HEK293T (cell line): ENCODE measurements at regions of chr17 and their contacts with region 1.

Region 1: GRCh38 chr17:65100316-65101140 is 36.6 kb upstream of the RGS9 start:
- DNase-seq: peak; percentile 88

Region 2: DNA sequence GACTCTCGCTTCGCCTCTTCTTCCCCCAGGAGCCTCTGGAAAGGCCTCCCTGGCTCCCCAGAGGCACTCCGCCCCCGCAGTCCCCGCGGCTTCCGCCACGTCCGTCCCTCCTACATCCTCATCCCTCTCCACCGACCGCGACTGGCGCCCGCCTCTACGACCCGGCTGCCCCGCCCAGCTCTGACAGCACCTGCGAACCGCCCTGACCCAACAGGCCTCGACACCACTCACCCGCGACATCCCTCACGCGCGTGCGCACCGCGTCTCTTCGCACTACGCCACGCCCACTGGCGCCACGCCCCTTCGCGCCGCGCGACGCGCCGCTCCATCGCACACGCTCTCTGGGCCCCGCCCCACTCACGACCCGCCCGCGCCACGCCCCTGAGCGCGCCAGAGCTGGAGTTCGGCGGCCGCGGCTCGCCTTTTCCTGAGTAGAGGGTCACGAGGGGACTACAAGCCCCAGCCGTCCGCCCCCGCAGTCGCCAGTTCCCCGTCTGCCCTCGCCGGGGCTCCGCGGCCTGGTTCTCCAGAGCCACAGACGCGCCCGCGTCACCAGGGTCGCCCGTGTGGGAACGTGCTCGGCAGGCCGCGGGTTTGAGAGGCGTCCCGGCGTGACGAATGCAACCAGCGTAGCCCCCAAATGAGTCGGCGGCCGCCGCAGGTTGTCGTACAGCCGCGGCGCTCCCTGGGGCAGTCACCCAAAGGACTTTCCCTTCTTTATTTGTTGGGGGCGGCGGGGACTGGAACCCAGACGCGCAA is 125.0 kb before region 1 on chr17:
- CTCF ChIA-PET with region 1: interaction called, 3 read pairs
- POLR2A ChIA-PET with region 1: interaction called, 17 read pairs
- DNase-seq: peak; percentile 94

Region 3: GRCh38 chr17:65056262-65056638 is 44.3 kb before region 1 on chr17:
- CTCF ChIA-PET with region 1: no interaction called
- POLR2A ChIA-PET with region 1: interaction called, 10 read pairs
- DNase-seq: no peak

Region 4: DNA sequence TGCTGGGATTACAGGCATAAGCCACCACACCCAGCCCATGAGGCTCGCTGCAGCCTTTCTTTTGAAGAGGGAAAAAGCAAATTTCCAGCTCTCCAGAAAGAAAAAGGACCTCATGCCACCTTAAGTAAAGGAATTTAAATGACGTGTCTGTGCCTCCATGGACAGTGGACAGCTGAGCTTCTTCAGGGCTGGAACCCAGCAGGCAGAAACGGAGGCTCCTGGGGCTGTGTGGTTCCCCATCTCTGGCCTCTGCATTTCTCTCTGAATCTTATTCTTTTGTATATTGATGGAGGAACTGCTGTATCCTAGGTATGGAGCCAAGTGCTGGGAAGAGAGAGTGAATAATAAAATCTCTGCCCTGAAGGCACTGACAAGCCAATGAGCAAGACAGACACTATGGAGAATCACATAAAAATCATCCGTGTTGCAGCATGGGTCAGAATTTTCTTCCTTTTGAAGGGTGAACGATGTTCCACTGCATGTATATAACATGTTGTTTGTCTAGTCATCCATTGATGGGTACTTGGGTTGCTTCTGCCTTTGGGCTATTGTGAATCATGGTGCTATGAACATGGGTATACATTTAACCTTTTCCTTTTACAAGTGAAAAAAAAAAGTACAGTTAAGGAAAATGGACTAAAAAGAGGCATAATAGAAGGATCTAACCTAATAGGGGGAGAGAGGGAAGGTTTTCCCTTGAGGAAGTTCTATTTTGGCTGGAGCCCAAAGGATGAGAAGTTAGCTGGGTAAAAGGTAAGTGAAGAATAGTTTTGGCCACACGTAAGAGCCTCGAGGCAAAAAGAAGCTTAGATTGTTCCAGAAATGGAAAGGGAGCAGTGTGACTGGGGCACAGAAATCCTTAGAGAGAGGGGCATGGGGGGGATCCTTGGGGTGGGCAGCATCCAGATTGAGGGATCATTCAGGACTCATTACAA is 11.8 kb before region 1 on chr17:
- CTCF ChIA-PET with region 1: interaction called, 12 read pairs
- POLR2A ChIA-PET with region 1: no interaction called
- DNase-seq: no peak